ENCODE measurements at regions of chr19 and their contacts with region 1.

Region 1: DNA sequence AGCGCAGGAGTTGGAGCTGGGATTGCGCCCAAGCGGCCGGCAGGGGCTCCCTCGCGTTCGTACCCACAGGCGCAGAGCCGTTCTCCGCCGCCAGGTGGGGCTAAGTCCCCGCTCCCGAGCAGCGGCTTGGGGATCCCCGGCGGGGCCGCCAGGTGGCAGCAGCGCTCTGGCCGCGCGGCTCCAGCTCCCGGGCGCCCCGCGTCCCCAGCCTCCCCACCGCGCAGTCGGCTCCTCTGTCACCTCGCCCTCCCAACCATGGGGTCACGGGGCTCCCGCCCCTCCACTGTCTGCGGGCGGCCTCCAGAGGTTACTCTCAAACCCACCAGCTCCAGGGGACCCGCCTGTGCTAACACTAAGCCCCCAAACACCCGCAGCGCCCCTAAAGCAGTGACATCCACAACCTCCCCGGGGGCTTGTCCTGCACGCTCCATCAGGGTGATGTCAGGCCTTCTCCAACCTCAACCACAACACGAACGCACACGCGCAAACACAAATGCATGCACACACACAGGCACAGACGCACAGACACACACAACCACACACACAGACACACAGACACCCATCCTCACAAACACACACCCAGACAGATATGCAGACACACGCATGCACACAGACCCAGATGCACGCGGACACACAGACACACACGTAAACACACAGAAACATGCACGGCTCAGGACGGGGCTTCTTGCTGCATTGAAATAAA is 18.4 kb upstream of the KCTD15 start:
- DNase-seq: peak; percentile 89
- ATAC-seq: peak; percentile 98
- H3K4me3 Mint-ChIP-seq: no peak overlapping the region
- H3K27ac Mint-ChIP-seq: no peak overlapping the region
- H3K4me1 Mint-ChIP-seq: peaks cover 3% of the 10 kb centered on the region
- H3K27me3 Mint-ChIP-seq: peaks cover 29% of the 10 kb centered on the region
- CTCF ChIP-seq: peak; percentile 98

Region 2: GRCh38 chr19:33521480-33522370 is 256.5 kb before region 1 on chr19 and contains the start of gene PEPD:
- CTCF ChIA-PET with region 1: no interaction called
- POLR2A ChIA-PET with region 1: no interaction called
- intact Hi-C with region 1: loop called (anchors 1 kb)
- DNase-seq: peak; percentile 78
- ATAC-seq: peak; percentile 98
- H3K4me3 Mint-ChIP-seq: peak within 1 kb of the TSS; percentile 91
- H3K27ac Mint-ChIP-seq: peak within 1 kb of the TSS; percentile 66
- H3K4me1 Mint-ChIP-seq: peaks cover 19% of the 10 kb centered on the region
- H3K27me3 Mint-ChIP-seq: peaks cover 3% of the 10 kb centered on the region
- CTCF ChIP-seq: no peak
- total RNA-seq, gene PEPD: 49.1 and 49.4 TPM in 2 replicates

Region 3: GRCh38 chr19:33819880-33820781 is 41.9 kb after region 1 on chr19:
- CTCF ChIA-PET with region 1: interaction called, 8 read pairs
- POLR2A ChIA-PET with region 1: no interaction called
- intact Hi-C with region 1: loop called (anchors 1 kb)
- DNase-seq: peak; percentile 60
- ATAC-seq: peak; percentile 78
- H3K4me3 Mint-ChIP-seq: peak overlapping the region; percentile 85
- H3K27ac Mint-ChIP-seq: peak overlapping the region; percentile 41
- H3K4me1 Mint-ChIP-seq: peaks cover 36% of the 10 kb centered on the region
- H3K27me3 Mint-ChIP-seq: no peaks in the 10 kb centered on the region
- CTCF ChIP-seq: no peak

Region 4: GRCh38 chr19:34096020-34096915 is 318.0 kb after region 1 on chr19:
- CTCF ChIA-PET with region 1: interaction called, 42 read pairs
- POLR2A ChIA-PET with region 1: no interaction called
- intact Hi-C with region 1: loop called (anchors 1 kb)
- DNase-seq: no peak
- ATAC-seq: no peak
- H3K4me3 Mint-ChIP-seq: no peak overlapping the region
- H3K27ac Mint-ChIP-seq: no peak overlapping the region
- H3K4me1 Mint-ChIP-seq: no peaks in the 10 kb centered on the region
- H3K27me3 Mint-ChIP-seq: peaks cover 17% of the 10 kb centered on the region
- CTCF ChIP-seq: peak; percentile 16

Region 5: GRCh38 chr19:34345947-34346351 is 567.7 kb after region 1 on chr19:
- CTCF ChIA-PET with region 1: no interaction called
- POLR2A ChIA-PET with region 1: no interaction called
- intact Hi-C with region 1: loop called (anchors 5 kb)
- DNase-seq: peak; percentile 49
- ATAC-seq: peak; percentile 81
- H3K4me3 Mint-ChIP-seq: no peak overlapping the region
- H3K27ac Mint-ChIP-seq: no peak overlapping the region
- H3K4me1 Mint-ChIP-seq: peaks cover 5% of the 10 kb centered on the region
- H3K27me3 Mint-ChIP-seq: no peaks in the 10 kb centered on the region
- CTCF ChIP-seq: no peak